ENCODE measurements at regions of chrX and their contacts with region 1.

Region 1: GRCh38 chrX:43654431-43655150 is 1.5 kb upstream of the MAOA start:
- DNase-seq: peak; percentile 78 to 92 (median 90)
- H3K4me3 ChIP-seq: peak overlapping the region; percentile 40 to 83 (median 66)
- H3K27ac ChIP-seq: peak overlapping the region in 57 of 59 donors; percentile 20 to 94 (median 84)
- H3K27me3 ChIP-seq: peaks cover 0 to 37% (median 0%) of the 10 kb centered on the region in 45 donors
- CTCF ChIP-seq: peak in 40 of 56 donors; percentile 7 to 55 (median 36)

Region 2: GRCh38 chrX:41923257-41923969 is 1731.2 kb before region 1 on chrX and contains the start of gene CASK:
- intact Hi-C with region 1: loop called (anchors 10 kb)
- DNase-seq: peak; percentile 75 to 93 (median 88)
- H3K4me3 ChIP-seq: peak within 1 kb of the TSS; percentile 43 to 79 (median 65)
- H3K27ac ChIP-seq: peak within 1 kb of the TSS in 55 of 59 donors; percentile 15 to 90 (median 78)
- H3K27me3 ChIP-seq: peaks cover 0 to 65% (median 19%) of the 10 kb centered on the region in 45 donors
- CTCF ChIP-seq: peak in 14 of 56 donors; percentile 12 to 37 (median 24)
- total RNA-seq, gene CASK: 35.0 to 72.8 (median 52.6) TPM

Region 3: DNA sequence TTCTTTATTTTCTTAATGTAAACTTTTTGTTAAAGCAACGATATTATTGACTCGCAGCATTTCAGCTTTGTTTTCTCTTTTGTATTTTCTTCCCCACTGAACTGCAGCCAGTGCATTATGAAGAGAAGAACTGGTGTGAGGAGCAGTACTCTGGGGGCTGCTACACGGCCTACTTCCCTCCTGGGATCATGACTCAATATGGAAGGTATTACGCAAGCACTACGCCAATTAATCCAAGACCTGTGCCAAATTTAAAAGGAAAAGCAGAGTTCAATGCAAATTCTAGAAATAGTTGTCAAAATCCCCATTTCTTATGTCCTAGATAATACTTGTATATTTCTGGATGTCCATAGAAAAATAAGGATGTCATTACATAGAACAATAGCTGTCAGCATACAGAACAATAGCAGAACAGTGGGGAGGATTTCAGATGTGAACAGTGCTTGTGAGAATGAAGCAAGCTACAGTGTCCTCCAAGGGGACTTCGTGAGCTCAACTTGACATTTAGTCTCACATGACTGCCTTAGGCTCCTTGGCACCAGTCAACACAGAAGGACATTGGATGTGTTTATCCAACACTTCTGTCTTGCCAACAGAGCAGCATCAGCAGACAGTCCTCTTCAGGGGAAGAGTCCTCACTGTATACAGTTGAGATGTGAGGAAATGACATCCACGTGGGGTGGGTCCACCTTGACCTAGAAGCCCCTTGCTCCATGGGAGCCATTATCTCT is 87.4 kb after region 1 on chrX:
- intact Hi-C with region 1: loop called in 1 of 2 experiments (anchors 10 kb)
- DNase-seq: no peak
- H3K4me3 ChIP-seq: no peak overlapping the region
- H3K27ac ChIP-seq: peak overlapping the region in 6 of 59 donors; percentile 1 to 53 (median 14)
- H3K27me3 ChIP-seq: peaks cover 0 to 88% (median 14%) of the 10 kb centered on the region in 45 donors
- CTCF ChIP-seq: no peak

Measured in dorsolateral prefrontal cortex (tissue), 120 donors.